ENCODE measurements at regions of chr6 and their contacts with region 1.

Region 1: DNA sequence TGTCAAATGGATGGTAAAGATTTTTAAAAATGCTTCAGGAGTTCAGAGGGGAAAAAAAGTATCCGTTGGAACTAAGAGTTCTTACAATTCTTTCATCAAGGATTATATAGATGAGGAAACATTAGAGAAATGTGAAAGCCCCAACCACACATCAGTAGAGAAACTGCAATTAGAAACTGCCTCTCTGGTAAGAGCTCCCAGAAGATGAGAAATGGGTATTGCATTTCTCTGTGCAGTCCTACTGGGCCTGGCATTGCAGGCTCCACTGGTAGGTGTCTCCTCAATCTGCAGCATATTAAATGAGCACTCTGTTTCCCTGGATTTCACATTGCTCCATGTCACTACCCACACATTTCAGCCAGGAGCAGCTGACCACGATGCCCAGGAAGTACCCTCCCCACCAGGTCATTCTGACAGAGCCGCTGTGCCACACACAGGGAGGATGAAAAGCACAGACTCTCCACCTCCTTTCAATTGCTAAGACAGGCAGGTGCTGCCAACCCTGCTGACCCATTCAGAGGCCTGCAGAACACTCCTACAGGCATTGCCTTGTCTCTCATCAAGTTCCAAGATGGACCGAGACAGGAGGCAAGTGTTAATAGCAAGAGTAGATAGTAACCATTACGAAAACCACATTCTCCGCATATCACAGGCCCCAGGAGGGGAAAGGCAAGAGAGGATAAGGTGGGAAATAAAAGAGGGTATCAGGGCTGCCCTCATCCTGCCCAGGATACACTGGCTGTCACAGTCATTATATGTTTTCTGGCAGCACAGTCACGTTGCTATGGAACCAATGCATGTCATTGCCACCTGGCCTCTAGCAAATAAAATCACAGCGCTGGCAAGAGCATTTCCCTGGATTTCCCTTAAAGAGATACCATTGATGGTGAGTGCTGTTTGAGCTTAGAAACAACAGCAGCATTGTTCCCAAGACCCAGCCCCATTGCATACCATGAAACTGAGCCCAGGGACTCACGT is 241.7 kb downstream of the ATXN1 start:
- DNase-seq: no peak
- H3K4me3 ChIP-seq: no peak overlapping the region
- H3K27ac ChIP-seq: no peak overlapping the region
- H3K4me1 ChIP-seq: no peaks in the 10 kb centered on the region
- H3K27me3 ChIP-seq: no peaks in the 10 kb centered on the region
- CTCF ChIP-seq: no peak
- POLR2A ChIP-seq: no peak

Region 2: GRCh38 chr6:15569035-15569995 is 950.2 kb before region 1 on chr6:
- intact Hi-C with region 1: no loop called
- DNase-seq: no peak
- H3K4me3 ChIP-seq: no peak overlapping the region
- H3K27ac ChIP-seq: no peak overlapping the region
- H3K4me1 ChIP-seq: no peaks in the 10 kb centered on the region
- H3K27me3 ChIP-seq: no peaks in the 10 kb centered on the region
- CTCF ChIP-seq: no peak
- POLR2A ChIP-seq: no peak

Region 3: DNA sequence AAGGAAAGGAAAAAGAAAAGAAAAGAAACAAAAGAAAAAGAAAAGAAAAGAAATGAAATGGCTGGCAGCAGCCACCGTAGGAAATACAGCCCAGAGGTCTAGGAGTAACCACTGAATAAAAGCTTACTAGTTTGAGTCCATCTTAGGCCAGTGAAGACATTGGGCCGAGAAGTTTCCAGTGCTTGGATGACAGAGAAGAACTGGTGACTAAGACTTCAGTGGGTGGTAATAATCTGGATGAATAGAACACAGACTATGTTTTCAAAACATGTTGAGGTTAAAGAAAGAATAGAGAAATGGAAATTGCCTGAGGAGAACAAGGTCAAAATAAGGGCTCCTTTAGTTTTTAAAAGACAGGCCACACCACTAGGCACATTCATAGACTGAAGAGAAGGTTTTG is 42.9 kb after region 1 on chr6:
- intact Hi-C with region 1: loop called (anchors 2 kb)
- DNase-seq: no peak
- H3K4me3 ChIP-seq: no peak overlapping the region
- H3K27ac ChIP-seq: no peak overlapping the region
- H3K4me1 ChIP-seq: no peaks in the 10 kb centered on the region
- H3K27me3 ChIP-seq: no peaks in the 10 kb centered on the region
- CTCF ChIP-seq: no peak
- POLR2A ChIP-seq: no peak

Region 4: DNA sequence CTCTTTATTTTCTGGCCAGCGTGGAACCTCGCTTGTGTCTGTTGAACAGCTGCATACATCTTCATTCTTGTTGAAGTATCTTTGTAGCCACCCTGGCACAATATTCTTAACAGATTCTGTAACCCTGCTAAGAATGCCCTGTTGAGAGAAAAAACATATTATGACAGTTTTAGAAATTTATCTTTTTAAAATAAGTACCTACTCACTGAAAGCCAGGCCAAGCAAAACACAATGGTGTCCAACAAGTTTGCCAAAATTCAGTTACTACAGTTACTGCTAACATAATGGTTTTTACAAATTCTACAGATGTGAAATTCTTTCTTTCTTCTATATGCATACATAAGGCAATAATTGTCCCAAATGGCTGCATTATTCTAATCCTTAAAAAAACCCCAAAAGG is 1168.9 kb after region 1 on chr6:
- intact Hi-C with region 1: loop called (anchors 5 kb)
- DNase-seq: no peak
- H3K4me3 ChIP-seq: no peak overlapping the region
- H3K27ac ChIP-seq: no peak overlapping the region
- H3K4me1 ChIP-seq: no peaks in the 10 kb centered on the region
- H3K27me3 ChIP-seq: no peaks in the 10 kb centered on the region
- CTCF ChIP-seq: no peak
- POLR2A ChIP-seq: no peak